Common myeloid progenitor, CD34-positive (primary cell): ENCODE measurements at regions of chr7 and their contacts with region 1.

Region 1: DNA sequence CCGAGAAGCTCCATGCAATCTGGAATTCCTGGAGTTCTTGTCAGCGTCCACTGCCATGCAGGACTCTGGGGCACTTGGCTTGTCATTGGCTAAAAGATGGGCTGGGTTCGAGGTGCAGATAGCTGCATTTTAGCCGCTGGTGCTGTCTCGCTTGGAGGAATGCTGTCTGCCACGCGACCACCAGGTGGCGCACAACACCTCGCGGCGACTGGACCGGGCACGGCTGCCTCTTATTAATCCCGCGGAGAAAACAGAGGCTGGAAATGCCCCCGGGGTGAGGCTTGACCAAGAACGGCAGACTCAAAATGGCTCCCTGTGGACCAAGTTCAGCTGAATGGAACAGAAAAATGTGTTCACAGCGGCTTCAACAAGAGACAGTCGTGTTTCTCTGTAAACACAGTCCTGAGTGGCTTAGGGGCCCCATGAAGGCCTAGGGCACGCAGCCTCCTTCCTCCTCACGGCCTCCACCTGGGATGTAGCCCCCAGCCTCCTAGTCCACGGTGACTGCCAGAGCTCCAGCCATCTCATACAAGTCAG is 46.2 kb downstream of the AOC1 start:
- DNase-seq: peak; percentile 60 to 68 (median 64)
- H3K4me3 ChIP-seq: no peak overlapping the region
- H3K27ac ChIP-seq: no peak overlapping the region
- H3K4me1 ChIP-seq: peaks cover 0 to 21% (median 11%) of the 10 kb centered on the region in 4 experiments
- H3K27me3 ChIP-seq: peaks cover 0 to 35% (median 19%) of the 10 kb centered on the region in 5 experiments

Region 2: GRCh38 chr7:150937848-150938561 is 39.5 kb after region 1 on chr7:
- CTCF ChIA-PET with region 1: interaction called, 14 read pairs
- POLR2A ChIA-PET with region 1: interaction called, 3 read pairs
- DNase-seq: peak; percentile 25 to 81 (median 75)
- H3K4me3 ChIP-seq: peak overlapping the region in 1 of 7 experiments; percentile 40
- H3K27ac ChIP-seq: no peak overlapping the region
- H3K4me1 ChIP-seq: peaks cover 0 to 46% (median 36%) of the 10 kb centered on the region in 4 experiments
- H3K27me3 ChIP-seq: peaks cover 0 to 2% (median 0%) of the 10 kb centered on the region in 5 experiments

Region 3: DNA sequence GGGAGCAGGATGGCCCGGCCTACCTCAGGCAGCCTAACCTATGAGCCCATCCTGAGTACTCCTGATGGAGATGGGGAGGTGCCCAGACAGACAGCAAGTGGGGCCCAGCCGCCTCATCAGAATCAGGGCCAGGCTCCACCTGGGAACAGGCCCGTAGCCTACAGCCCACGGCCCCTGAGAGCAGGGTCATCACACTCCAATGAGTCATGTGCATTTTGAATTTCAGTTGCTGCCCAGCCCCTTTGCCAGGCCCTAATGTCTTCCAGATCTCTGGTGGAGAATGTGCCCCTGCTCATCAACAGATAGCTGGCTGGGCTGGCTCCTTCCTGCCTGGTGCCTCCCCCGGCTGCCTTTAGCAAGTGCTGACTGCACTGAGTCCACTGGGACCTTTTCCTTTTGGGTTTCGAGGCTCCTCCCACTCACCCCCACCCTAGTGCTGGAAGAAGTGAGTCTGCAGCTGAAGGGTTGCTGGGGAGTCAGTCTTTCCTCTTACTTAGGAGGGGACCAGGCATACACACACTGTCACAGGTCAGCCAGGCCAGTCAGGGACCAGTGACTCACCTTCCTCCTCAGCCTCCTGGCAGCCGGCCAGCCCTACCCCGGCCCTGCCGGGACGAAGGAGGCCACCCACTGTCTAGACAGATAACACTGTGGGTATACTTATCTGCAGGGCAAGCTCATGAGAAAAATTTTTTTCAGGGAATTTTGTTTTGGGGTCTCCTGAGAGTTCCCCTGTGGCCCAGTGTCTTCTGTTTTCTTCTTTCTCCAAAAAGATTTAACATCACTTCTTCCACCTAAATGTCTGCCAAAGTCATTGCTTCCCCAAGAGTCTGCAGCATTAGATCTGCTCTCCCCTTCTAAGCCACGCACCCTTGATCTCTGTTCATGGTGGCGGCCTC is 140.7 kb after region 1 on chr7:
- CTCF ChIA-PET with region 1: no interaction called
- POLR2A ChIA-PET with region 1: no interaction called
- DNase-seq: peak; percentile 68 to 88 (median 82)
- H3K4me3 ChIP-seq: peak overlapping the region in 1 of 7 experiments; percentile 38
- H3K27ac ChIP-seq: peak overlapping the region in 1 of 2 experiments; percentile 70
- H3K4me1 ChIP-seq: peaks cover 0 to 29% (median 26%) of the 10 kb centered on the region in 4 experiments
- H3K27me3 ChIP-seq: no peaks in the 10 kb centered on the region